Activated naive CD4-positive, alpha-beta T cell treated with anti-CD3 and anti-CD28 coated beads, Interleukin-2, amount 10 ng/mL, durations not matched to agents 7 days and 5 days (primary cell): ENCODE measurements at regions of chrX and their contacts with region 1.

Region 1: DNA sequence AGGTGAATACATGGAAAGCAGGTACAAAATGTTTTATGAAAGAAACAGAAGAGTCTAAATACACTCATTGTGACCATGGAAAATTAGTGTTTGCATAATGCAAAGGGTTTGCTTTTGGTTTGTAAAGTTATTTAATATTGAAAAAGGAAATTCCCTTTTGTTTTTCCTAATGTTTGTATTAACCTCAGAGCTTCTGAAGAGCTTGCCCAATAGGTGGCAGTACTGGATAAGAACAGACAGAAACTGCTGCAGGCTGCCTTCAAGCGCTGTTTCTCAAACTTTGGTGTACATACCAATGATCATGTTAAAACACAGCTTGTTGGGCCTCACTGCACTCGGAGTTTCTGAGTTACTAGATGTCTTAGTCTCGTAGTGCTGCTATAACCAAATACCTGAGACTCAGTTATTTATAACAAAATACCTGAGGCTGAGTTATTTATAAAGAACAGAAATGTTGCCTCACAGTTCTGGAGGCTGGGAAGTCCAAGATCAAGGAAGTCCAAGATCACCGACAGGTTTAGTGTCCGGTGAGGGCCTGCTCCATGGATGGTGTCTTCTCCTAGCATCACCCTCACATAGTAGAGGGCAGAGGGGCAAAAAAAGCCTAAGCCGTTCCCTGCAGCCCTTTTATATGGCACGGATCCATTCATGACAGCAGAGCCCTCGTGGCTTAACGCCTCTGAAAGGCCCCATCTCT is 54.2 kb downstream of the SUPT20HL2 start:
- DNase-seq: peak; percentile 35
- H3K4me3 Mint-ChIP-seq: no peak overlapping the region
- H3K27ac Mint-ChIP-seq: no peak overlapping the region
- H3K4me1 Mint-ChIP-seq: peaks cover 19% of the 10 kb centered on the region
- H3K27me3 Mint-ChIP-seq: no peaks in the 10 kb centered on the region

Region 2: DNA sequence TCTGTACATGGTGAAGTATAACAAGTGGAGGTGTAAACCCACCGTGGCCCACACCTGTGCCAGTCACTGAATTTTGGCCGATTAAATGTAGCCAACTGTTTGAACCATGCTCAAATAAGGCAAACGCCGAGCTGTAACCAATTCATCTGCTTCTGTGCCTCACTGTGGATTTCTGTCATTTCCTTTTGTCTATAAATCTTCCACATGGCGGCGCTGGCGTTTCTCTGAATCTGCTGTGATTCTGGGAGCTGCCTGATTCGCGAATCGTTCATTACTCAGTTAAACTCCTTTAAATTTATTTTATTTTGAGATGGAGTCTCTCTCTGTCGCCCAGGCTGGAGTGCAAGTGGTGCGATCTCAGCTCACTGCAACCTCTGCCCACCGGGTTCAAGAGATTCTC is 34.9 kb after region 1 on chrX:
- CTCF ChIA-PET with region 1: interaction called, 12 read pairs
- DNase-seq: peak; percentile 50
- H3K4me3 Mint-ChIP-seq: no peak overlapping the region
- H3K27ac Mint-ChIP-seq: no peak overlapping the region
- H3K4me1 Mint-ChIP-seq: no peaks in the 10 kb centered on the region
- H3K27me3 Mint-ChIP-seq: peaks cover 4% of the 10 kb centered on the region